Left cardiac atrium (tissue), 4 donors: ENCODE measurements at regions of chr20 and their contacts with region 1.

Region 1: GRCh38 chr20:5222919-5223634 is 93.7 kb downstream of the PROKR2 start:
- DNase-seq: peak; percentile 44
- ATAC-seq: peak; percentile 62 to 71

Region 2: GRCh38 chr20:5448449-5449118 is 225.5 kb after region 1 on chr20:
- intact Hi-C with region 1: loop called in 1 of 2 experiments (anchors 10 kb)
- DNase-seq: no peak
- ATAC-seq: no peak